ENCODE measurements at regions of chr6 and their contacts with region 1.

Region 1: GRCh38 chr6:169751242-169752073 is at the starts of genes DYNLT2 and ERMARD:
- DNase-seq: peak; percentile 94

Region 2: GRCh38 chr6:169701954-169702839 is 49.3 kb before region 1 on chr6 and contains the starts of genes C6orf120 and WDR27:
- CTCF ChIA-PET with region 1: no interaction called
- POLR2A ChIA-PET with region 1: interaction called, 21 read pairs
- DNase-seq: peak; percentile 98

Region 3: GRCh38 chr6:169723200-169723909 is 28.1 kb before region 1 on chr6:
- CTCF ChIA-PET with region 1: no interaction called
- POLR2A ChIA-PET with region 1: interaction called, 49 read pairs
- DNase-seq: peak; percentile 66

Measured in HEK293T (cell line).